A549 (cell line): ENCODE measurements at regions of chr9 and their contacts with region 1.

Region 1: GRCh38 chr9:38339087-38339486 is 53.4 kb upstream of the ALDH1B1 start:
- DNase-seq: no peak
- ATAC-seq: no peak; a peak in 1 of 6 replicates
- H3K4me3 ChIP-seq: no peak overlapping the region
- H3K27ac ChIP-seq: no peak overlapping the region
- H3K4me1 ChIP-seq: peaks cover 5% of the 10 kb centered on the region; the same call in 1 of the 3 replicates
- CTCF ChIP-seq: no peak
- EP300 ChIP-seq: no peak
- POLR2A ChIP-seq: no peak
- RAD21 ChIP-seq: no peak

Region 2: GRCh38 chr9:38319496-38320173 is 19.5 kb before region 1 on chr9:
- CTCF ChIA-PET with region 1: no interaction called
- POLR2A ChIA-PET with region 1: no interaction called
- DNase-seq: no peak
- ATAC-seq: 0 out of 6 replicates have a peak, but pooled peaks of 1 of the 2 experiments have one; percentile 33
- H3K4me3 ChIP-seq: no peak overlapping the region
- H3K27ac ChIP-seq: peak overlapping the region in 1 of 2 experiments; percentile 40; a peak in 2 of 6 replicates
- H3K4me1 ChIP-seq: peaks cover 12% of the 10 kb centered on the region
- CTCF ChIP-seq: no peak
- EP300 ChIP-seq: no peak
- POLR2A ChIP-seq: no peak
- RAD21 ChIP-seq: no peak

Region 3: GRCh38 chr9:38362852-38363593 is 23.9 kb after region 1 on chr9:
- CTCF ChIA-PET with region 1: interaction called, 12 read pairs
- POLR2A ChIA-PET with region 1: no interaction called
- DNase-seq: peak; percentile 60 to 72
- ATAC-seq: peak; percentile 81 to 87
- H3K4me3 ChIP-seq: no peak overlapping the region
- H3K27ac ChIP-seq: peak overlapping the region in 1 of 2 experiments; percentile 46; a peak in 2 of 6 replicates
- H3K4me1 ChIP-seq: 0 out of 3 replicates have a peak, but pooled peaks cover 4% of the 10 kb centered on the region
- CTCF ChIP-seq: peak; percentile 84
- EP300 ChIP-seq: no peak
- POLR2A ChIP-seq: no peak
- RAD21 ChIP-seq: peak; percentile 91 to 95